ENCODE measurements at regions of chr7 and their contacts with region 1.

Region 1: GRCh38 chr7:43906331-43907010 is at the start of gene URGCP:
- DNase-seq: peak; percentile 56 to 64
- H3K4me3 ChIP-seq: peak within 1 kb of the TSS; percentile 88
- H3K27ac ChIP-seq: peak within 1 kb of the TSS; percentile 77
- H3K4me1 ChIP-seq: peaks cover 40% of the 10 kb centered on the region
- H3K27me3 ChIP-seq: no peaks in the 10 kb centered on the region
- CTCF ChIP-seq: no peak
- total RNA-seq, gene URGCP: 45.7 and 49.5 TPM in 2 replicates

Region 2: DNA sequence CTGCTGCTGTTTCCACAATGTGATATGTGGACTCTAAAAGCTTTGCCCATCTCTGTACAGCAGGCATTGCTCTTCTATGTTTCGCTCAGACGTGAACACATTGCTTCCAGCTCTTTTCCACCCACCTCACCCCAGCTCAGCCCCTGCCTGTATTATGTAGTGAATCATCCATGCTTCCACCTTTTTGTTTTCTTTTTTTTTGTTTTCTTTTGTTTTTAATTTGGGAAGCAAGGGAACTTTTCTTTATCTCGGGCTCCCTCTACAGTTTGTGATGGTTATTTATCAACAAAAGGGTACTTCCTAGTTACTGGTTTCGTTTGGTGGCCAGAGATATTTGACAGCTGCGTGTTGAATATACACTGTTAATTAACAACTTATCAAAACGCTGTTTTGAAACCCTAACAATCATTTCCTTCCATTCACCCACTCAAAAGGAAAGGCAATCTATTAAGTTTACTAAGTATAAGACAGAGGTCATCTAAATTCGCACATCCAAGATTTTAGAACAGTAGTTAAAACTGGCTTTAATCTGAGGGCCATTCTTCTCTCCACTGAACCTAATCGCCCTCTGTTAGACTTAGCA is 451.4 kb before region 1 on chr7:
- CTCF ChIA-PET with region 1: no interaction called
- POLR2A ChIA-PET with region 1: no interaction called
- intact Hi-C with region 1: no loop called
- DNase-seq: peak in 1 of 2 experiments; percentile 48
- H3K4me3 ChIP-seq: no peak overlapping the region; the same call in 1 of the 2 replicates
- H3K27ac ChIP-seq: no peak overlapping the region
- H3K4me1 ChIP-seq: no peaks in the 10 kb centered on the region
- H3K27me3 ChIP-seq: peaks cover 49% of the 10 kb centered on the region
- CTCF ChIP-seq: peak; percentile 83

Region 3: GRCh38 chr7:43784030-43785001 is 122.2 kb before region 1 on chr7:
- CTCF ChIA-PET with region 1: no interaction called
- POLR2A ChIA-PET with region 1: no interaction called
- intact Hi-C with region 1: no loop called
- DNase-seq: no peak
- H3K4me3 ChIP-seq: no peak overlapping the region
- H3K27ac ChIP-seq: peak overlapping the region; percentile 33
- H3K4me1 ChIP-seq: peaks cover 43% of the 10 kb centered on the region
- H3K27me3 ChIP-seq: no peaks in the 10 kb centered on the region
- CTCF ChIP-seq: no peak

Region 4: DNA sequence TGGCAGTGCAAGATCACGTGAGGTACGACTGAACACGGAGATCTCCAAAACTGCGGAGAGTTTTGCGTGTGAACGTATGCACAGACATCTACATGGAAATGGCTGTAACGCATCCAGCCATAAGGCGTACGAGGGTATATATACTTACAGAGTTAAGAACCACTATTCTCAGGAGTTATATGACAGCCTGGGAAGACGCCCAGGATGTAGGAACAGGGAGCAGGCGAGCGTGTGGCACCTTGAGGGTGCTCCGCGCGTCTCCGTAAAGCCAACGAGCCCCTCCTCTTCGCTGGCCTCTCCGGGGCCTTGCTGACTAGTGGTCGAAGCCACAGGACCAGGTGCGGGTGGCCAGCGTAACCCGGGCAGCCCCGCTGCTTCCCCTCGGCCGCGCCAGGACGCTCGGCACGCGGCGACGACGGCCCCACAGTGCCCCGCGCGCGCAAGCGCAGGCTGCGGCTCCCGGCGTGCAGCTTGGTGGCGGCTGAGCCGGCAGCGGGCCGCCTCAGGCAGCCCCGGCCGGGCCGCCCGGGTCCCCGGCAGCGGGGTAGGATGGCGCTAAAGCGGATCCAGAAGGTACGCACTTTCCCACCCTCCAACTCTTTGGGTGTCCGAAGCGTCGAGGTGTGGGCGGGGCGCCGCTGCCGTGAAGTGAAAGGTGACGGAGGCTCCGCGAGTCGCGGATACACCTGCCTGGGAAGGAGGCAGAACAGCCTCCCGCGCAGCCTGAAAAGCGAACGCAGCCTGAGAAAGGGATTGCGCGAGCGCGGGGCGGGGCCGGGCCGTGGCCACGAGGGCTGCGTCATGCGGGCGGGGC is 19.7 kb after region 1 on chr7 and contains the start of gene UBE2D4:
- CTCF ChIA-PET with region 1: interaction called, 10 read pairs
- POLR2A ChIA-PET with region 1: interaction called, 3 read pairs
- intact Hi-C with region 1: loop called (anchors 2 kb)
- DNase-seq: peak; percentile 87 to 92
- H3K4me3 ChIP-seq: peak within 1 kb of the TSS; percentile 84
- H3K27ac ChIP-seq: peak within 1 kb of the TSS; percentile 84
- H3K4me1 ChIP-seq: peaks cover 21% of the 10 kb centered on the region
- H3K27me3 ChIP-seq: no peaks in the 10 kb centered on the region
- CTCF ChIP-seq: no peak
- total RNA-seq, gene UBE2D4: 11.2 and 17.1 TPM in 2 replicates

Region 5: DNA sequence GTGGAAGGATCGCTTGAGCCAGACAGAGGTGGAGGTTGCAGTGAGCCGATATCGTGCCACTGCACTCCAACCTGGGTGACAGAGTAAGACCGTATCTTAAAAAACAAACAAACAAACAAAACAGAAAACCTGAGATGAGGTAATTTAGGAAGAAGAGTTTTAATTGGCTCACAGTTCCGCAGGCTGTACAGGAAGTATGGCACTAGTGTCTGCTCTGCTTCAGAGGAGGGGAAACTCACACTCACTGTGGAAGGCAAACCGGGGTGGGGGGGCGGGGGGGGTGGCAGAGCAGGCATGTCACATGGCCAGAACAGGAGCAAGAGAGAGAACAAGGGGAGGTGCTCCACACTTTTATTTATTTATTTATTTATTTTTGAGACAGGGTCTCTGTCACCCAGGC is 24.9 kb after region 1 on chr7:
- CTCF ChIA-PET with region 1: interaction called, 10 read pairs
- POLR2A ChIA-PET with region 1: interaction called, 3 read pairs
- intact Hi-C with region 1: loop called (anchors 2 kb)
- DNase-seq: peak in 1 of 2 experiments; percentile 25
- H3K4me3 ChIP-seq: no peak overlapping the region
- H3K27ac ChIP-seq: no peak overlapping the region
- H3K4me1 ChIP-seq: 0 out of 2 replicates have a peak, but pooled peaks cover 10% of the 10 kb centered on the region
- H3K27me3 ChIP-seq: no peaks in the 10 kb centered on the region
- CTCF ChIP-seq: no peak

Region 6: GRCh38 chr7:44490351-44491200 is 584.1 kb after region 1 on chr7 and contains the start of gene NUDCD3:
- CTCF ChIA-PET with region 1: no interaction called
- POLR2A ChIA-PET with region 1: interaction called, 12 read pairs
- intact Hi-C with region 1: no loop called
- DNase-seq: peak; percentile 74 to 89
- H3K4me3 ChIP-seq: peak within 1 kb of the TSS; percentile 86
- H3K27ac ChIP-seq: peak within 1 kb of the TSS; percentile 92
- H3K4me1 ChIP-seq: peaks cover 27% of the 10 kb centered on the region
- H3K27me3 ChIP-seq: no peaks in the 10 kb centered on the region
- CTCF ChIP-seq: peak; percentile 38; the same call in 1 of the 2 replicates
- total RNA-seq, gene NUDCD3: 149 and 158 TPM in 2 replicates